ENCODE measurements at regions of chr2 and their contacts with region 1.

Region 1: GRCh38 chr2:145760781-145761649 is 1241.1 kb upstream of the ZEB2 start:
- DNase-seq: no peak
- H3K4me3 ChIP-seq: no peak overlapping the region
- H3K4me3 Mint-ChIP-seq: peak overlapping the region; percentile 37
- H3K27ac Mint-ChIP-seq: no peak overlapping the region
- H3K4me1 ChIP-seq: peaks cover 16% of the 10 kb centered on the region
- H3K4me1 Mint-ChIP-seq: no peaks in the 10 kb centered on the region
- H3K27me3 ChIP-seq: no peaks in the 10 kb centered on the region
- H3K27me3 Mint-ChIP-seq: no peaks in the 10 kb centered on the region
- CTCF ChIP-seq: no peak

Region 2: GRCh38 chr2:145561152-145561551 is 199.9 kb before region 1 on chr2:
- CTCF ChIA-PET with region 1: no interaction called
- POLR2A ChIA-PET with region 1: no interaction called
- intact Hi-C with region 1: loop called (anchors 1 kb)
- DNase-seq: no peak
- H3K4me3 ChIP-seq: no peak overlapping the region
- H3K4me3 Mint-ChIP-seq: no peak overlapping the region
- H3K27ac Mint-ChIP-seq: no peak overlapping the region
- H3K4me1 ChIP-seq: peaks cover 13% of the 10 kb centered on the region; the same call in 1 of the 2 replicates
- H3K4me1 Mint-ChIP-seq: peaks cover 10% of the 10 kb centered on the region
- H3K27me3 ChIP-seq: no peaks in the 10 kb centered on the region
- H3K27me3 Mint-ChIP-seq: peaks cover 3% of the 10 kb centered on the region
- CTCF ChIP-seq: no peak

Region 3: GRCh38 chr2:145724311-145724898 is 36.6 kb before region 1 on chr2:
- CTCF ChIA-PET with region 1: no interaction called
- POLR2A ChIA-PET with region 1: no interaction called
- intact Hi-C with region 1: no loop called
- DNase-seq: no peak
- H3K4me3 ChIP-seq: no peak overlapping the region
- H3K4me3 Mint-ChIP-seq: no peak overlapping the region
- H3K27ac Mint-ChIP-seq: no peak overlapping the region
- H3K4me1 ChIP-seq: no peaks in the 10 kb centered on the region
- H3K4me1 Mint-ChIP-seq: no peaks in the 10 kb centered on the region
- H3K27me3 ChIP-seq: no peaks in the 10 kb centered on the region
- H3K27me3 Mint-ChIP-seq: peaks cover 3% of the 10 kb centered on the region
- CTCF ChIP-seq: no peak

Region 4: DNA sequence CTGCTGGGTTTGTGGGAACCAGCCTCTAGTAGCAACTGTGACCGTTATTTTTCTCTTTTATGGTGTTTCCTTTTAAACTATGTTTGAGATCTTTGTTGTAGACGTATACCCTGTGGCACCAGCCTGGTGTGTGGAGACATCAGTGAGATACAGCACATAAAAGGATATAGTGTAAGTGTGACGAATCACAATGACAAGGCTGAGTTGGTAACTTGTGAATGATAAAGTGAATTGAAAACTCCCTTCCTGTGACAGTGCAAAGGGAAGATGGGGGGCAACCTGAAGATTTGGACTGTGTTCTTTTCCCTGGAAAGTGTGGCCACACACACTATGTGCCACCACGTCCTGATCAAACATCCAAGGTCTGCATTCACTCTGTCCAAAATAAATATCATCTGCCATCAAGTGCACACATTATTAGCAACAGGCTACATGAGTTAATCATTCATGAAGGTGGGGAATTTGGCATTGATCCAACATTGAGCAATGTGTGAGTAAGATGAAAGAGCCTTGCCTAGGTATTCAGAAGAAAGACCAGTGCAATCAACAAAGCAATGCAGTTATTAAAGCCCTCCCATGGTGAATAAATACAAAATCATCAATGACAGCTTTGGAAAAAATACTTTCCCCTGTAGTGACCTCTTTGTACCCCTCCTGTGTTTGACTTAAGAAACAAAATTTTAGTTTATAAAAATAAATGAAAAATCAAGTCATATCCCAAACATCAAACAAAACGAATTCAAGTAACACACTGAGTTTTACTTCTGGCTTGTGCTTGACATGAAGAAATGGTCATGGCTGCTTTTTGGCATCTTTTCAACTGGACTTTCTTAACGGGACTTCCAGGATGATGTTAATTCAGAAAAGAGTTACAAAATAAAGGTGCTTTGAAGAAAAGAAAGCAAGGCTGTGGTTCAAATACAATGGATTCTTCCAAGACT is 39.4 kb after region 1 on chr2:
- CTCF ChIA-PET with region 1: no interaction called
- POLR2A ChIA-PET with region 1: no interaction called
- intact Hi-C with region 1: loop called (anchors 1 kb)
- DNase-seq: peak in 1 of 2 experiments; percentile 66
- H3K4me3 ChIP-seq: no peak overlapping the region
- H3K4me3 Mint-ChIP-seq: peak overlapping the region; percentile 11
- H3K27ac Mint-ChIP-seq: peak overlapping the region; percentile 15
- H3K4me1 ChIP-seq: peaks cover 4% of the 10 kb centered on the region; the same call in 1 of the 2 replicates
- H3K4me1 Mint-ChIP-seq: no peaks in the 10 kb centered on the region
- H3K27me3 ChIP-seq: no peaks in the 10 kb centered on the region
- H3K27me3 Mint-ChIP-seq: no peaks in the 10 kb centered on the region
- CTCF ChIP-seq: no peak